ENCODE measurements at regions of chr11 and their contacts with region 1.

Region 1: DNA sequence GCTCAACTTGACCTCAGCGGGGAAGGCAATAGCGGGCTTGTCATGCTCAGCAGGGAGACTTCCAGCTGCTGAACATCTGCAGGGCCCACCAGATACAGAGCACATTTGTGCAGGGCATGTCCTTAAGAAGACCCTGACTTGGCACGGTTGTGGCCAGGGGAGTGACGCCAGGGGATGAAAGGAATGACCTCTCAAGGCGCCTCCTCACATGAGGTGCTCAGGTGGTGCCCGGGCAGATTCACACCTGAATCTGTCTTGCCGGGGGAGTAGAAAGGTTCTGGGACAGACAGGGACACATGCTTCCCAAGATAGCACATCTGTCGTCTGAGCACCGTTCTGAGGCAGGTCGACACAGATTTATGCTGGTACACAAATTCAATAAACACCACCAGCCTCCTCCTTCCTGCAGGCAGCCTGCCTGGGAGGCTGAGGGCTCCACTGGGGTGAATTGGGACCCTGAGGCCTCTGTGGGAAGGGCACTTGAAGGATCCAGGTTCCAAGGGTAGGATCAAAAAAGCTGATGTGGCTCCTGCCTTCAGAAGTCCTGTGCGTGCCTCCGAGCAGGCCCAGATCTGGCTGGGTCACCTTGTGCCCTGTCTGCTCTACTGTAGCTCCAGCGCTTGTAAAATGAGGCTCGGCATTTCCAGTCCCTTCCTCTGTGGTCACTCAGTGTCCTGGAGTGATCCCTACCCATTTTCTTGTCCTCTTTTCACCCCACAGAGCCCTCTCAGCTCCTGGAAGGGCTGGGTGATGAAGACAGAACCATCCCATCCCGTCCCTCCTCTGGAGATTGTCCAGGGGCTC is 49.6 kb upstream of the NECTIN1 start:
- DNase-seq: peak in 1 of 2 donors; percentile 8
- ATAC-seq: no peak
- H3K4me3 ChIP-seq: no peak overlapping the region
- H3K27ac ChIP-seq: no peak overlapping the region
- H3K4me1 ChIP-seq: no peaks in the 10 kb centered on the region
- H3K27me3 ChIP-seq: peaks cover 0 to 15% (median 0%) of the 10 kb centered on the region in 3 donors
- CTCF ChIP-seq: no peak

Region 2: GRCh38 chr11:119794756-119795155 is 16.2 kb after region 1 on chr11:
- intact Hi-C with region 1: loop called in 1 of 2 experiments (anchors 1 kb)
- DNase-seq: no peak
- ATAC-seq: no peak
- H3K4me3 ChIP-seq: no peak overlapping the region
- H3K27ac ChIP-seq: no peak overlapping the region
- H3K4me1 ChIP-seq: no peaks in the 10 kb centered on the region
- H3K27me3 ChIP-seq: peaks cover 0 to 26% (median 0%) of the 10 kb centered on the region in 3 donors
- CTCF ChIP-seq: no peak